Dendritic cell treated with granulocyte-macrophage colony-stimulating factor and Interleukin-4, amounts not matched to agents 40 ng/mL and 50 ng/mL, for 4 days (primary cell): ENCODE measurements at regions of chr9 and their contacts with region 1.

Region 1: GRCh38 chr9:33403941-33404787 is 1.8 kb upstream of the AQP7 start:
- H3K4me3 Mint-ChIP-seq: no peak overlapping the region
- H3K27ac Mint-ChIP-seq: peak overlapping the region; percentile 2
- H3K4me1 Mint-ChIP-seq: peaks cover 17% of the 10 kb centered on the region
- H3K27me3 Mint-ChIP-seq: peaks cover 2% of the 10 kb centered on the region

Region 2: GRCh38 chr9:33466565-33467495 is 62.7 kb after region 1 on chr9:
- intact Hi-C with region 1: loop called (anchors 1 kb)
- H3K4me3 Mint-ChIP-seq: no peak overlapping the region
- H3K27ac Mint-ChIP-seq: no peak overlapping the region
- H3K4me1 Mint-ChIP-seq: peaks cover 8% of the 10 kb centered on the region
- H3K27me3 Mint-ChIP-seq: no peaks in the 10 kb centered on the region

Region 3: DNA sequence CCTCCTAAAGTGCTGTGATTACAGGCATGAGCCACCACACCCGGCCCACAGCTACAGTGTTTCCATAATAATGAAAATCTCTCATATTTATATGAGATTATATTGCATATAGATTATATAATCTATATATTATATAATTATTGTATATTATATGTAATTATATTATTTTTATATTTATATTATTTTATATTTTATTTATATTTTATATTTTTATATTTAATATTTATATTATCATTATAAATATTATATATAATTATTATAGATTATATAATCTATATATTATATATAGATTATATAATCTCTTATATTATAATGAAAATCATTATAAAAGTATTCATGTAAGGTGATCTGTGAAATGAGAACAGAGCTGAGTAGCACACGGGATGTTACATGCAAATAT is 131.4 kb after region 1 on chr9:
- intact Hi-C with region 1: no loop called
- H3K4me3 Mint-ChIP-seq: no peak overlapping the region
- H3K27ac Mint-ChIP-seq: no peak overlapping the region
- H3K4me1 Mint-ChIP-seq: no peaks in the 10 kb centered on the region
- H3K27me3 Mint-ChIP-seq: peaks cover 12% of the 10 kb centered on the region